ENCODE measurements at regions of chr11 and their contacts with region 1.

Region 1: GRCh38 chr11:20110908-20111669 is 49.2 kb downstream of the DBX1 start:
- DNase-seq: peak; percentile 61
- H3K4me3 ChIP-seq: no peak overlapping the region
- H3K27ac ChIP-seq: peak overlapping the region; percentile 88
- H3K4me1 ChIP-seq: peaks cover 38% of the 10 kb centered on the region
- H3K27me3 ChIP-seq: no peaks in the 10 kb centered on the region
- CTCF ChIP-seq: peak; percentile 83 to 89
- POLR2A ChIP-seq: no peak

Region 2: GRCh38 chr11:19938169-19938856 is 172.8 kb before region 1 on chr11:
- CTCF ChIA-PET with region 1: no interaction called
- POLR2A ChIA-PET with region 1: no interaction called
- dilution Hi-C with region 1: no loop called
- intact Hi-C with region 1: loop called (anchors 5 kb)
- DNase-seq: peak; percentile 71
- H3K4me3 ChIP-seq: no peak overlapping the region
- H3K27ac ChIP-seq: no peak overlapping the region
- H3K4me1 ChIP-seq: peaks cover 9% of the 10 kb centered on the region
- H3K27me3 ChIP-seq: no peaks in the 10 kb centered on the region
- CTCF ChIP-seq: peak; percentile 79 to 88
- POLR2A ChIP-seq: no peak

Region 3: DNA sequence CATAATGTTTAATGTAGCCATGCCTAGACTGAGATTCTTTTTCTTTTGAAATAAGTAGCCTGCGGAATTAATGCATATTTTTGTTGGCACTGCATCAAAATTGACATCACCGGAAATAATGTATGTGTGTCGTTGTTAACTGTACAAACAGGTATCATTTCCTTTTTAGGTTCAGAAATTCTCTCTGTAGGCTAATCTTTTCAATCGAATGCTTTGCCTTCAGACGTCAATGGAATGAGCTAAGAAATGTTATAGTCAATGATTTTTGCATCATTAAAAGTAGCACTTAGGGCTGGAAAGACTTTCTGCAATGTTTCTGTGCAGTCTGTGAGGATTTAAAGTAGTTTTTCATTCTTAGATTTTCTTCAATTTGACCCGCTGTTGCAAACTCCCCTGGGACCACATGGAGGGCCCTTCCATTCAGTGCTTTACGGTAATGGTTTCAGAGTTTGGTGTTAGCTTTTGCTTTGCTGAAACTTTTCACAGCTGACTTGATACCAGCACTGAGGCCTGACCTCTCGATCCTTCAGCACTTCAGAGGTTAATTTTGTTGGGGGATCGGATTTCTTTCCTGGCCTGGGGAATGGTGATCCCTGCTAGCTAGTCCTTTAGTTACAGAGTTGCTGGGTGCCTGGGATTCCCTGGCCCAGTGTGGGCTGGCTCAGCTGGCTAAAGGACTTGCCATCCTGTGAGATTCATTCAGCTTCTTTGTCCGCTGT is 88.6 kb before region 1 on chr11:
- CTCF ChIA-PET with region 1: interaction called, 4 read pairs
- POLR2A ChIA-PET with region 1: interaction called, 3 read pairs
- dilution Hi-C with region 1: no loop called
- intact Hi-C with region 1: loop called (anchors 5 kb)
- DNase-seq: peak; percentile 90
- H3K4me3 ChIP-seq: peak overlapping the region in 1 of 3 experiments; percentile 13
- H3K27ac ChIP-seq: peak overlapping the region; percentile 88
- H3K4me1 ChIP-seq: peaks cover 25% of the 10 kb centered on the region
- H3K27me3 ChIP-seq: no peaks in the 10 kb centered on the region
- CTCF ChIP-seq: no peak
- POLR2A ChIP-seq: no peak

Region 4: GRCh38 chr11:20033806-20034205 is 77.3 kb before region 1 on chr11:
- CTCF ChIA-PET with region 1: no interaction called
- POLR2A ChIA-PET with region 1: no interaction called
- dilution Hi-C with region 1: no loop called
- intact Hi-C with region 1: no loop called
- DNase-seq: no peak
- H3K4me3 ChIP-seq: no peak overlapping the region
- H3K27ac ChIP-seq: no peak overlapping the region
- H3K4me1 ChIP-seq: no peaks in the 10 kb centered on the region
- H3K27me3 ChIP-seq: no peaks in the 10 kb centered on the region
- CTCF ChIP-seq: no peak
- POLR2A ChIP-seq: no peak

Region 5: GRCh38 chr11:20097319-20098221 is 13.5 kb before region 1 on chr11:
- CTCF ChIA-PET with region 1: interaction called, 60 read pairs
- POLR2A ChIA-PET with region 1: no interaction called
- dilution Hi-C with region 1: no loop called
- intact Hi-C with region 1: loop called (anchors 1 kb)
- DNase-seq: peak; percentile 99
- H3K4me3 ChIP-seq: peak overlapping the region in 1 of 3 experiments; percentile 1
- H3K27ac ChIP-seq: peak overlapping the region; percentile 94
- H3K4me1 ChIP-seq: peaks cover 64% of the 10 kb centered on the region
- H3K27me3 ChIP-seq: no peaks in the 10 kb centered on the region
- CTCF ChIP-seq: no peak
- POLR2A ChIP-seq: peak; percentile 34

Region 6: DNA sequence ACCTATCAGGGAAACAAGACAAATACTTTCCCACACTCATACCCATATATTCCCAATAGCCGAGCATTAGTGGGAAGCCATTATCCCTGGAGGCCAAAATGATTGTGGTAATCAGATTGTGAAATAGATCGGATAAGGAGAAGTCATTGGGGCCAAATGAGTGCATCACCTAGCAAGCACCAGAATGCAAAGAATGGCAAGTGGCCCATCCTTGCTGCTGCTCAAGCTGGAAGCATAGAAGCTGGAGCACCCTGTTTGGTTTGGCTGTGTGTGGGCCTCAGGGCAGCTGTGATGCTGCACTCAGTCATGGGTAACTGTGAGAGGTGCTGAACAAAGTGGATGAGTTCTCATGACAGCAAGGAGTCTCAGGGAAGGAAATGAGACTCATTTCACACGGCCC is 67.9 kb after region 1 on chr11:
- CTCF ChIA-PET with region 1: no interaction called
- POLR2A ChIA-PET with region 1: no interaction called
- dilution Hi-C with region 1: no loop called
- intact Hi-C with region 1: no loop called
- DNase-seq: no peak
- H3K4me3 ChIP-seq: no peak overlapping the region
- H3K27ac ChIP-seq: no peak overlapping the region
- H3K4me1 ChIP-seq: no peaks in the 10 kb centered on the region
- H3K27me3 ChIP-seq: peaks cover 6 to 19% of the 10 kb centered on the region in 2 experiments
- CTCF ChIP-seq: no peak
- POLR2A ChIP-seq: no peak